ENCODE measurements at regions of chr6 and their contacts with region 1.

Region 1: GRCh38 chr6:18264219-18264922 is at the start of gene DEK:
- DNase-seq: peak; percentile 65 to 76 (median 75)
- H3K4me3 ChIP-seq: peak within 1 kb of the TSS; percentile 58 to 87 (median 81)
- H3K4me3 Mint-ChIP-seq: peak within 1 kb of the TSS; percentile 94 to 96
- H3K27ac ChIP-seq: peak within 1 kb of the TSS; percentile 73 to 88
- H3K27ac Mint-ChIP-seq: peak within 1 kb of the TSS; percentile 87 to 97 (median 95)
- H3K4me1 ChIP-seq: peaks cover 41 to 44% of the 10 kb centered on the region in 2 donors
- H3K4me1 Mint-ChIP-seq: peaks cover 46% of the 10 kb centered on the region
- H3K27me3 ChIP-seq: no peaks in the 10 kb centered on the region
- H3K27me3 Mint-ChIP-seq: no peaks in the 10 kb centered on the region
- CTCF ChIP-seq: peak; percentile 69
- polyA plus RNA-seq, gene DEK: 32.3 to 63.9 (median 56.5) TPM

Region 2: GRCh38 chr6:17907406-17908229 is 356.8 kb before region 1 on chr6:
- intact Hi-C with region 1: no loop called
- DNase-seq: peak; percentile 96 to 98 (median 98)
- H3K4me3 ChIP-seq: peak overlapping the region in 2 of 3 experiments; percentile 47 to 67
- H3K4me3 Mint-ChIP-seq: peak overlapping the region; percentile 61 to 92
- H3K27ac ChIP-seq: peak overlapping the region; percentile 88 to 93
- H3K27ac Mint-ChIP-seq: peak overlapping the region; percentile 92 to 99 (median 98)
- H3K4me1 ChIP-seq: peaks cover 49 to 64% of the 10 kb centered on the region in 2 donors
- H3K4me1 Mint-ChIP-seq: peaks cover 70% of the 10 kb centered on the region
- H3K27me3 ChIP-seq: no peaks in the 10 kb centered on the region
- H3K27me3 Mint-ChIP-seq: peaks cover 0 to 2% (median 0%) of the 10 kb centered on the region in 3 donors
- CTCF ChIP-seq: peak; percentile 39

Region 3: DNA sequence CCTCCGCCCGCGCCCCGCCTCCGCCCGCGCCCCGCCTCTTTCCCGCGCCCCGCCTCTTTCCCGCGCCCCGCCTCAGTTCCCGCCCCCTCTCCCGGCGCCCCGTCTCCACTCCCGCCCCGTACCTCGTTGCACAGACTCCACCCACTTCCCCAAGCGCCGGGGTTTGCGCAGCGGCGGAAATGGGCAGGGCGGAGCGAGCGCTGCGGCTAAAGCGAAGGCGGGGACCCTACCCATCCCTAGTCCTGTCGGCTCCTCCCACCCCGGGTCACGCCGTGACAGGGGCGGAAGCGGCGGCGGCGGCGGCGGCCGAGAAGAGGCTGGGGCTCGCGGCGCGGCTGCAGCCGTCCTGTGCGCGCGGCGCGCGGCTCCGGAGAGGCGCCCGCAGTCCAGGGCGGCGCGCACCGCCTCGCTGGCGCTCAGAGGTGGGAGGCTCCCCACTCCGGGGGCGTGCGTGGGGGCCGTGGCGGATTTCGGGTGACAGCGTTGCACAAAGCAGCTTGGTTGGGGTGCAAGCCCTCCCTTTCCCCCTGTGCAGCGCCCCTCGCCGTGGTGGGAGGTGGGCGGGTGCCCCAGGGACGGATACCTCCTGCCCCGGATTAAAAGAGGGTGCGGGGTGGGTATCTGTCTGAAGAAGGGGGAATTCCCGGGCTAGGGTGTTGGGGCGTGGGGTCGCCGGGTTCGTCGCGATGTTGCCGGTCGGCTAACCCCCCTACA is 109.1 kb before region 1 on chr6 and contains the start of gene KDM1B:
- intact Hi-C with region 1: loop called (anchors 5 to 10 kb)
- DNase-seq: peak; percentile 97 to 99 (median 99)
- H3K4me3 ChIP-seq: peak within 1 kb of the TSS; percentile 90 to 99 (median 99)
- H3K4me3 Mint-ChIP-seq: peak within 1 kb of the TSS; percentile 96 to 100
- H3K27ac ChIP-seq: peak within 1 kb of the TSS; percentile 99
- H3K27ac Mint-ChIP-seq: peak within 1 kb of the TSS; percentile 98 to 100 (median 99)
- H3K4me1 ChIP-seq: peaks cover 31 to 58% of the 10 kb centered on the region in 2 donors
- H3K4me1 Mint-ChIP-seq: peaks cover 48% of the 10 kb centered on the region
- H3K27me3 ChIP-seq: no peaks in the 10 kb centered on the region
- H3K27me3 Mint-ChIP-seq: peaks cover 0 to 1% (median 0%) of the 10 kb centered on the region in 3 donors
- CTCF ChIP-seq: no peak
- polyA plus RNA-seq, gene KDM1B: 4.4 to 50.8 (median 24.1) TPM

Region 4: DNA sequence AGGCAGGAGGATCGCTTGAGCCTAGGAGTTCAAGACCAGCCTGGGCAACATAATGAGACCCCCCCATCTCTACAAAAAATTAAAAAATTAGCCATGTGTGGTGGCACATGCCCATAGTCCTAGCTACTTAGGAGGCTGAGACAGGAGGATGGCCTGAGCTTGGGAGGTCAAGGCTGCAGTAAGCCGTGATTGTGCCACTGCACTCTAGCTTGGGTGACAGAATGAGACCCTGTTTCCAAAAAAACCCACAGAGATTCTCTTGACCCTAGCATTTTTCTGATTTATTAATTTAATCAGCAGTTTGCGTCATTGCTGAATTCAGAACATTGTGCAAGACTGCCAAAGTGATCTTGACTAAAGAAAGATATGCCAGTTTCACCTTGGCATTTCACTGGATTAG is 72.3 kb before region 1 on chr6:
- intact Hi-C with region 1: loop called in 1 of 2 experiments (anchors 10 kb)
- DNase-seq: no peak
- H3K4me3 ChIP-seq: no peak overlapping the region
- H3K4me3 Mint-ChIP-seq: no peak overlapping the region
- H3K27ac ChIP-seq: peak overlapping the region in 1 of 2 donors; percentile 32
- H3K27ac Mint-ChIP-seq: peak overlapping the region in 1 of 7 donors; percentile 55
- H3K4me1 ChIP-seq: peaks cover under 1 to 5% of the 10 kb centered on the region in 2 donors
- H3K4me1 Mint-ChIP-seq: peaks cover 3% of the 10 kb centered on the region
- H3K27me3 ChIP-seq: no peaks in the 10 kb centered on the region
- H3K27me3 Mint-ChIP-seq: no peaks in the 10 kb centered on the region
- CTCF ChIP-seq: no peak

Region 5: DNA sequence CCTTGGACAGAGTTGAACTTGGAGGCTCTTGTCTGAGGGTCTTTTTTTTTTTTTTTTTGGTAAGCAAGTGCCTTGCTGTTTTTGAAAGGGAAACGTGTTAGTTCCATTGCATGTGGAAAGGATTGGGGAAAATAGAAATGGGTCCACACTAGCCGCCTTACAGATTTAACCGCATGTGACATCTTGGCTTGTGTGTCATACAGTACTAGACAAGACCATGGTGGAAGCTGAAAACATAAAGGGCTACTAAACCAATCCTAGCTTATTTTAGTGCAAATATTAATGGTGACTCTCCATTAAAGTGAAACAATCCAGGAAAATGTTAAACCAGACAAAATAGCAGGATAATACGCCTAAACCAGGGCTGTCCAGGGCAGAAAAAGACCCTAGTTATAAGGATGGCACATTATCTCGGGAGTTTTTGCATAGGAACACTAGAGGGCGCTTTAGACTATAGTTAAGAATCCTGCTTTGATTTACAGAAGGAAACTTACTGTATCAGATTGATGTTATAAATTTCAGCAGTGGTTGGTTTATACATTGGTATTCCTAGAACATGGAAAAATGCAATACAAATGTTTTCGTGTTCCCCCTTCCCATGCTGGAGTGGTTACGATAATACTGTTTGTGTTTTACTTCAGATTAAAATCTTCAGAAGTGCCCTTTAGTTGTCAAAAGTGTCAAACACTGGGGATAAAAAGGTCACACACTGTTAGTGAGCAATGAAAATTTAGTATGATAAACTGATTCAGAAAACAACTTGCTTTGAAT is 59.7 kb after region 1 on chr6:
- intact Hi-C with region 1: loop called in 1 of 2 experiments (anchors 10 kb)
- DNase-seq: peak; percentile 40 to 77 (median 64)
- H3K4me3 ChIP-seq: no peak overlapping the region
- H3K4me3 Mint-ChIP-seq: no peak overlapping the region
- H3K27ac ChIP-seq: no peak overlapping the region
- H3K27ac Mint-ChIP-seq: peak overlapping the region in 3 of 7 donors; percentile 27 to 63 (median 33)
- H3K4me1 ChIP-seq: peaks cover 32 to 36% of the 10 kb centered on the region in 2 donors
- H3K4me1 Mint-ChIP-seq: peaks cover 35% of the 10 kb centered on the region
- H3K27me3 ChIP-seq: no peaks in the 10 kb centered on the region
- H3K27me3 Mint-ChIP-seq: peaks cover 0 to 2% (median 0%) of the 10 kb centered on the region in 3 donors
- CTCF ChIP-seq: peak; percentile 88

Region 6: GRCh38 chr6:18387061-18387721 is 122.8 kb after region 1 on chr6 and contains the start of gene RNF144B:
- intact Hi-C with region 1: loop called in 1 of 2 experiments (anchors 10 kb)
- DNase-seq: peak; percentile 74 to 87 (median 77)
- H3K4me3 ChIP-seq: peak within 1 kb of the TSS; percentile 88 to 90 (median 89)
- H3K4me3 Mint-ChIP-seq: peak within 1 kb of the TSS; percentile 93 to 99
- H3K27ac ChIP-seq: peak within 1 kb of the TSS; percentile 85 to 89
- H3K27ac Mint-ChIP-seq: peak within 1 kb of the TSS; percentile 92 to 98 (median 97)
- H3K4me1 ChIP-seq: peaks cover 34 to 40% of the 10 kb centered on the region in 2 donors
- H3K4me1 Mint-ChIP-seq: peaks cover 44% of the 10 kb centered on the region
- H3K27me3 ChIP-seq: no peaks in the 10 kb centered on the region
- H3K27me3 Mint-ChIP-seq: peaks cover 0 to 3% (median 2%) of the 10 kb centered on the region in 3 donors
- CTCF ChIP-seq: no peak
- polyA plus RNA-seq, gene RNF144B: 25.6 to 31.0 (median 27.9) TPM

Region 7: GRCh38 chr6:18503593-18504231 is 239.3 kb after region 1 on chr6:
- intact Hi-C with region 1: loop called (anchors 5 kb)
- DNase-seq: peak; percentile 59 to 85 (median 81)
- H3K4me3 ChIP-seq: peak overlapping the region; percentile 19 to 67 (median 63)
- H3K4me3 Mint-ChIP-seq: peak overlapping the region; percentile 73 to 89
- H3K27ac ChIP-seq: peak overlapping the region; percentile 75 to 87
- H3K27ac Mint-ChIP-seq: peak overlapping the region; percentile 92 to 99 (median 97)
- H3K4me1 ChIP-seq: peaks cover 30 to 33% of the 10 kb centered on the region in 2 donors
- H3K4me1 Mint-ChIP-seq: peaks cover 36% of the 10 kb centered on the region
- H3K27me3 ChIP-seq: no peaks in the 10 kb centered on the region
- H3K27me3 Mint-ChIP-seq: no peaks in the 10 kb centered on the region
- CTCF ChIP-seq: peak; percentile 94

Measured in CD14-positive monocyte (primary cell).